ENCODE measurements at regions of chr6 and their contacts with region 1.

Region 1: DNA sequence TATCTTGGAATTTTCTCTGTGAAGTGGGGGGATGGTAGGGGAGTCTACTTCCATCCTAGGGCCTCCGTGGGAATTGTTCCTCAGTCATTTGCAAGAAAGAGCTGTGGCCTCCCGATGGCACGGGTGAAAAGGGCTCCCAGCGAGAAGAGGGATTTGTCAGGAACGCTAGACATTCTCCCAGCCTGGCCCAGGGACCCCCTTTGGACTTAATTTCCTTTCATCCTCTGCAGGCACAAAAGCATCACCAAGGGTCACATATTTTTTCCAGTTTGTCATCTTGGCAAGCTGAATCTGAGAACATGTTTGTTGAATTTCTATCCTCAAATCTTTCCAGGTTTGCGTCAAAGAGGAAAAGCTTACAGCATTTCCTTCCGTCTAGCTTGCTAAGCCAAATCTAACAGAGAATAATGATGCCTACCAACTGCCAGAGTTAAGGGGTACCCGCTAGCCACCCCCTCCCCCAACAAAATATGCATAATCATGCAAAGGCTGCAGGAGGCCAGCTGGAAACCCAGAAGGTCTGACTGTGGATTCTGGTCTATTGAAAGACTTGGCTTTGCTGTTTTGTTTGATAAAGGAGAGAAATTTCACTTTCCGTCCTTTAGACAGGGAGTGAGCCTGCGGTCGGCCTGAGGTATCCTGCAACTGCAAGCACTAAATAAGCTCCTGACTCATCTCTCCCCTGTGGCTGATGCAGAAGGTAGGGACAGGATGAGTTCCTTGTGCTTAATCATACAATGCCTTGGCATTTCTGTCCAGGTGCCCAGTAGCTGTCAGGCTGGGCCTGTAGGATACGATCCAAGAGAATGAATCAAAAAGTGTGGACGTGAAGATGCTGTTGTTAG is 23.1 kb downstream of the PSMG4 start:
- DNase-seq: peak; percentile 91
- H3K4me3 ChIP-seq: no peak overlapping the region
- H3K27ac ChIP-seq: peak overlapping the region; percentile 87
- H3K27me3 ChIP-seq: no peaks in the 10 kb centered on the region
- CTCF ChIP-seq: no peak

Region 2: GRCh38 chr6:3721810-3722626 is 440.2 kb after region 1 on chr6:
- in situ Hi-C with region 1: loop called (anchors 10 kb)
- DNase-seq: no peak
- H3K4me3 ChIP-seq: no peak overlapping the region
- H3K27ac ChIP-seq: no peak overlapping the region
- H3K27me3 ChIP-seq: no peaks in the 10 kb centered on the region
- CTCF ChIP-seq: no peak

Measured in brain microvascular endothelial cell (primary cell).